ENCODE measurements at regions of chr1 and their contacts with region 1.

Region 1: GRCh38 chr1:37612200-37612599 is 16.5 kb upstream of the GNL2 start:
- DNase-seq: no peak
- H3K4me3 ChIP-seq: no peak overlapping the region
- H3K27ac ChIP-seq: no peak overlapping the region
- H3K4me1 ChIP-seq: no peaks in the 10 kb centered on the region
- H3K27me3 ChIP-seq: peaks cover 3% of the 10 kb centered on the region
- CTCF ChIP-seq: no peak

Region 2: DNA sequence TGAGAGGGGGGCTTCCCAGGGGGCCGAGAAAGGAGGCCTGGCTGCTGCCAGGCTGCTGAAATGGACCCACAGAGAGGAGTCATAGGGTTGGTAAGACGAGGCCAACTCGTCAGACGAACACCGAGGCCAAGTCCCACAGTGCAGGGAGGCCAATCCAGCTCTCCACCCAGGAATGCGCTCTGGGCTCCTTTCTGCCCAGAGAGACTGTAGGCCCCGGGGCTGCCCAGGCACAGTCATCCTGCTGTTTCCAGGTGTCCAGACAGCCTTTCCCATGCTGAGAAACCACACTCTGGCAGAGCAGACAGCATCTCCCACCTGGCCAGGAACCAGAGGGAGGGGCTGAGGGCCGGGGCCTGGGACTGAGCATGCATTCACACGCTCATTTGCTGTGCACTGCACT is 49.2 kb after region 1 on chr1:
- CTCF ChIA-PET with region 1: no interaction called
- dilution Hi-C with region 1: loop called (anchors 5 kb)
- in situ Hi-C with region 1: no loop called
- intact Hi-C with region 1: no loop called
- DNase-seq: peak; percentile 87
- H3K4me3 ChIP-seq: no peak overlapping the region
- H3K27ac ChIP-seq: no peak overlapping the region
- H3K4me1 ChIP-seq: peaks cover 11% of the 10 kb centered on the region
- H3K27me3 ChIP-seq: no peaks in the 10 kb centered on the region
- CTCF ChIP-seq: no peak